HCT116 (cell line): ENCODE measurements at regions of chr9 and their contacts with region 1.

Region 1: GRCh38 chr9:96854073-96854876 is at the start of gene ZNF782:
- DNase-seq: peak; percentile 86
- ATAC-seq: peak; percentile 94
- H3K4me3 ChIP-seq: peak within 1 kb of the TSS; percentile 76 to 77
- H3K27ac ChIP-seq: peak within 1 kb of the TSS; percentile 49; the same call in 1 of the 2 replicates
- H3K4me1 ChIP-seq: peaks cover 6 to 17% of the 10 kb centered on the region in 2 experiments; a peak in 3 of 4 replicates
- H3K27me3 ChIP-seq: no peaks in the 10 kb centered on the region
- CTCF ChIP-seq: no peak
- POLR2A ChIP-seq: peak; percentile 55
- RAD21 ChIP-seq: no peak
- total RNA-seq, gene ZNF782: 3.7 TPM

Region 2: GRCh38 chr9:96327694-96328352 is 526.5 kb before region 1 on chr9:
- CTCF ChIA-PET with region 1: no interaction called
- POLR2A ChIA-PET with region 1: no interaction called
- RAD21 ChIA-PET with region 1: no interaction called
- intact Hi-C with region 1: loop called (anchors 10 kb)
- DNase-seq: no peak
- ATAC-seq: peak; percentile 77
- H3K4me3 ChIP-seq: no peak overlapping the region
- H3K27ac ChIP-seq: no peak overlapping the region
- H3K4me1 ChIP-seq: peaks cover 9 to 20% of the 10 kb centered on the region in 2 experiments
- H3K27me3 ChIP-seq: no peaks in the 10 kb centered on the region
- CTCF ChIP-seq: peak; percentile 70 to 77 (median 75); a peak in 5 of 6 replicates
- POLR2A ChIP-seq: no peak
- RAD21 ChIP-seq: peak; percentile 83

Region 3: DNA sequence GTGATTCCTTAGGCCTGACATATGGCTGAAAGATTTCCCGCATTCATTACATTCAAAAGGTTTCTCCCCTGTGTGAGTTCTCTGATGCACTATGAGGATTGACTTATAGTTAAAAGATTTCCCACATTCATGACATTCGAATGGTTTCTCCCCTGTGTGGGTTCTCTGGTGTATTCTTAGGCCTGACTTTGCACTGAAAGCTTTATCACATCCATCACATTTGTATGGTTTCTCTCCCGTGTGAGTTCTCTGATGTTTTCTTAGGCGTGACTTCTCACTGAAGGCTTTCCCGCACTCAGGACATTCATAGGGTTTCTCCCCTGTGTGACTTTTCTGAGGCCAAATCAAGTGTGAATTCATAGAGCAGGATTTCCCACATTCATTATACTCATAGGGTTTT is 35.7 kb before region 1 on chr9:
- CTCF ChIA-PET with region 1: no interaction called
- POLR2A ChIA-PET with region 1: no interaction called
- RAD21 ChIA-PET with region 1: no interaction called
- intact Hi-C with region 1: no loop called
- DNase-seq: no peak
- ATAC-seq: no peak
- H3K4me3 ChIP-seq: no peak overlapping the region
- H3K27ac ChIP-seq: no peak overlapping the region
- H3K4me1 ChIP-seq: no peaks in the 10 kb centered on the region
- H3K27me3 ChIP-seq: no peaks in the 10 kb centered on the region
- CTCF ChIP-seq: no peak
- POLR2A ChIP-seq: no peak
- RAD21 ChIP-seq: no peak

Region 4: GRCh38 chr9:96875461-96876364 is 21.4 kb after region 1 on chr9:
- CTCF ChIA-PET with region 1: interaction called, 10 read pairs
- POLR2A ChIA-PET with region 1: no interaction called
- RAD21 ChIA-PET with region 1: no interaction called
- intact Hi-C with region 1: no loop called
- DNase-seq: peak; percentile 83
- ATAC-seq: peak; percentile 89
- H3K4me3 ChIP-seq: peak overlapping the region; percentile 50 to 63
- H3K27ac ChIP-seq: peak overlapping the region; percentile 32
- H3K4me1 ChIP-seq: peaks cover 3 to 26% of the 10 kb centered on the region in 2 experiments; a peak in 3 of 4 replicates
- H3K27me3 ChIP-seq: no peaks in the 10 kb centered on the region
- CTCF ChIP-seq: peak; percentile 25 to 51 (median 44); a peak in 5 of 6 replicates
- POLR2A ChIP-seq: no peak
- RAD21 ChIP-seq: peak; percentile 12; the same call in 1 of the 2 replicates

Region 5: GRCh38 chr9:97237951-97238851 is 383.9 kb after region 1 on chr9:
- CTCF ChIA-PET with region 1: no interaction called
- POLR2A ChIA-PET with region 1: interaction called, 4 read pairs
- RAD21 ChIA-PET with region 1: interaction called in 1 of 2 experiments, 4 read pairs
- intact Hi-C with region 1: loop called (anchors 2 kb)
- DNase-seq: peak; percentile 86
- ATAC-seq: peak; percentile 97
- H3K4me3 ChIP-seq: peak overlapping the region; percentile 65 to 79
- H3K27ac ChIP-seq: peak overlapping the region; percentile 72
- H3K4me1 ChIP-seq: peaks cover 8 to 18% of the 10 kb centered on the region in 2 experiments; a peak in 3 of 4 replicates
- H3K27me3 ChIP-seq: no peaks in the 10 kb centered on the region
- CTCF ChIP-seq: no peak
- POLR2A ChIP-seq: peak; percentile 95
- RAD21 ChIP-seq: no peak

Region 6: GRCh38 chr9:97398999-97399758 is 544.9 kb after region 1 on chr9:
- CTCF ChIA-PET with region 1: interaction called, 6 read pairs
- POLR2A ChIA-PET with region 1: no interaction called
- RAD21 ChIA-PET with region 1: no interaction called
- intact Hi-C with region 1: loop called (anchors 1 kb)
- DNase-seq: peak; percentile 73
- ATAC-seq: peak; percentile 90
- H3K4me3 ChIP-seq: peak overlapping the region in 1 of 2 experiments; percentile 30; a peak in 2 of 4 replicates
- H3K27ac ChIP-seq: no peak overlapping the region; the same call in 1 of the 2 replicates
- H3K4me1 ChIP-seq: peaks cover 4 to 10% of the 10 kb centered on the region in 2 experiments; a peak in 3 of 4 replicates
- H3K27me3 ChIP-seq: no peaks in the 10 kb centered on the region
- CTCF ChIP-seq: peak; percentile 76 to 98 (median 97)
- POLR2A ChIP-seq: no peak
- RAD21 ChIP-seq: peak; percentile 84

Region 7: DNA sequence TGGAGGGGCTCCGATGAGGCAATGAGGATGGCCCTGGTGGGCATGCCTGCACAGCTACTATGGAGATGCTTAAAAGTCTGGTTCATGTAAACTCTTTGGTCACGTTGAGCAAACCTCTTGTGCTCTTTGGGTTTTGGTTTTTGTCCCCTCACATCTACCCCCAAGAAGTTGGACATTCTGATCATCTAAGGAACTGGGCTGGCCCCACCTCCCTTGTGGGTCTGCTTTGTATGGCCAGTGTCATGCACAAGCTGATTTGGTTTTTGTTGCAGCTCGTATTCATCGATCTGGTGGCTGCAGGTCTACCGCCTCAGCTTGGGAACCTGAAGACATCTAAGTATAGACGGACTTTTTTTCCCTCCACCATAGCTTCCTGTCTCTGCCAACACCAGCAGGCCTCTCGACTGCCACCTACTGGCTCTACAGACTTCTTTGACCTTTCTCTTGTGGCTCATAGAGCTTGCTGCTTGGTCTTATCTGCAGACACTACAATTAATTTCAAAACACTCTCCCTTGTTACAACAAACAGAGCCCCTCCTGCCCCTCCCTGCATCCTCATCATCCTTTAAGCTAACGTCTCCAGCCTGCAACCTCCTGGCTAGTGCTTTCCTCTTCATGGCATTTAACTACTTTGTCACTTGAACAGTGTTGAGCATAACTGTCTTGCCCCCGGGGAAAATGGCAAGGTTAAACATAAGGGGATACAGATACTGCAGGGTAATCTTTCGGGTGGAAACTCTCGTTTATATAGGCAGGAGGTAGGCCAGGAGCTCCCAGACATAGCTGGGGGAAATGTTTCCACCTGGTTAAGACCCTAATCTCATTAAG is 744.4 kb after region 1 on chr9:
- CTCF ChIA-PET with region 1: interaction called, 6 read pairs
- POLR2A ChIA-PET with region 1: no interaction called
- RAD21 ChIA-PET with region 1: no interaction called
- intact Hi-C with region 1: loop called (anchors 2 kb)
- DNase-seq: peak; percentile 46
- ATAC-seq: peak; percentile 95
- H3K4me3 ChIP-seq: no peak overlapping the region
- H3K27ac ChIP-seq: no peak overlapping the region
- H3K4me1 ChIP-seq: peaks cover 0 to 3% of the 10 kb centered on the region in 2 experiments; a peak in 1 of 4 replicates
- H3K27me3 ChIP-seq: no peaks in the 10 kb centered on the region
- CTCF ChIP-seq: peak; percentile 82 to 91 (median 88)
- POLR2A ChIP-seq: no peak
- RAD21 ChIP-seq: peak; percentile 79

Region 8: DNA sequence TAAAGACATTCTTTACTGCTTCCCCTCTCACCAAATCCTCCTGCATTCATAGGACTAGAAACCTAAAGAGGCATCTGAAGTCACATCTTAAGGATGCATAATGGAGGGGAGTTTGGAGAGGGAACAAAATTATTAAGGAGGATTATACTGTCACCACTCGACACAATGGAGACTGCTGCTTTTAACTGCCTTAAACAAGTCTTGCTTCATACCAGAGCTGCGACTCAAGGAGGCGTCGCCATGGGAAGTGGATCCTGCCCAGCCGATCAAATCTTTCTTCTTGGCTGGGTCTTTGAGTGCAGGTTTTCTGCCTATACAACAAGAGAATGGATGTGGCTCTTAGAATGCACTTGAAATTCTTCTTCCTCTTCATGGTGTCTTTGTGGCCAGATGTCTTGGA is 932.1 kb after region 1 on chr9:
- CTCF ChIA-PET with region 1: no interaction called
- POLR2A ChIA-PET with region 1: no interaction called
- RAD21 ChIA-PET with region 1: no interaction called
- intact Hi-C with region 1: no loop called
- DNase-seq: peak; percentile 19
- ATAC-seq: peak; percentile 80
- H3K4me3 ChIP-seq: peak overlapping the region in 1 of 2 experiments; percentile 7; a peak in 1 of 4 replicates
- H3K27ac ChIP-seq: no peak overlapping the region
- H3K4me1 ChIP-seq: peaks cover 0 to 10% of the 10 kb centered on the region in 2 experiments; a peak in 2 of 4 replicates
- H3K27me3 ChIP-seq: peaks cover 3% of the 10 kb centered on the region; the same call in 1 of the 2 replicates
- CTCF ChIP-seq: no peak
- POLR2A ChIP-seq: no peak
- RAD21 ChIP-seq: no peak; the same call in 1 of the 2 replicates